GM10248 (cell line): ENCODE measurements at regions of chr1 and their contacts with region 1.

Region 1: DNA sequence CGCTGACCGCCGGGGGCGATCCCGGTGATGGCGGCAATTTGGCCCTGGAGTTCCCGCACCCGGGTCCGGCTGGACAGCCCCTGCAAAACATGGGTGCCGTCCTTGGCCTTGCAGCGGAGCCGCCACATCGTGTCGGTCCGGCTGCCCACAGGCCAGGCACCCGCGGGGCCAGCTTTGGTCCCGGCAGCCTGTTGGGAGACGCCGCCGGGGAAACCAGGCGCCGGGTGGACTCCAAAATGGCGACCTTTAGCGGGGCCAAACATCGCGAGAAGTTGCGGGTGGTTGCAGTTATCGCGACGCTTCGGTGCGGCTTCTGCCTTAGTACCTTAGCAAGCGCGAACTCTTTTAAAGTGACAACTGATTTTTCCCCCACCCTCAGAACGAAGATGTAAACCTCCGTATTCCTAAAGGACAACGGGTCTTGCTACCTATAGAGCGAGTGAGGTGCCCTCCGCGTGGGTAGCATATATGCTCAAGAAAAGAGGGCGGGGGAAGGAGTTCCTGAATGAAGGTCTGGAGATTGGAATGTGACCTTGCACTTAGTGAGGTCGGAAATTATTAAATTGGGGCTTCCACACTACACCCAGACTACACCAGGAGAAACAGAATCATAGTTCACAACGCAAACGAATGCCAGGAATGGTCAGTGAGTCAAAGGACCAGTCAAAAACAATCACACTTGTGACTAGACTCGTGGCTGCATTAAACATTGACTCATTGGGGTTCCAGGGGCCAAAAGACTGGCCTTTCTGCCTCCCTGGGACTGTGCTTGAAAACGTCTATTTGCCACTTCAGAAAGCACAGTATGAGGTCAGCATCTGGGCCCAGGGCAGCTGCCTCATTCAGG is at the start of gene YOD1:
- DNase-seq: peak; percentile 90
- CTCF ChIP-seq: no peak

Region 2: GRCh38 chr1:207015791-207016190 is 35.2 kb before region 1 on chr1:
- CTCF ChIA-PET with region 1: interaction called, 22 read pairs
- POLR2A ChIA-PET with region 1: no interaction called
- DNase-seq: no peak
- CTCF ChIP-seq: no peak

Region 3: GRCh38 chr1:207025144-207025880 is 25.7 kb before region 1 on chr1:
- CTCF ChIA-PET with region 1: interaction called, 12 read pairs
- POLR2A ChIA-PET with region 1: no interaction called
- DNase-seq: no peak
- CTCF ChIP-seq: no peak

Region 4: GRCh38 chr1:207032528-207033017 is 18.4 kb before region 1 on chr1 and contains the start of gene C1orf116:
- CTCF ChIA-PET with region 1: interaction called, 12 read pairs
- POLR2A ChIA-PET with region 1: no interaction called
- DNase-seq: no peak
- CTCF ChIP-seq: no peak

Region 5: GRCh38 chr1:207040181-207040533 is 10.8 kb before region 1 on chr1:
- CTCF ChIA-PET with region 1: interaction called, 12 read pairs
- POLR2A ChIA-PET with region 1: no interaction called
- DNase-seq: no peak
- CTCF ChIP-seq: no peak

Region 6: DNA sequence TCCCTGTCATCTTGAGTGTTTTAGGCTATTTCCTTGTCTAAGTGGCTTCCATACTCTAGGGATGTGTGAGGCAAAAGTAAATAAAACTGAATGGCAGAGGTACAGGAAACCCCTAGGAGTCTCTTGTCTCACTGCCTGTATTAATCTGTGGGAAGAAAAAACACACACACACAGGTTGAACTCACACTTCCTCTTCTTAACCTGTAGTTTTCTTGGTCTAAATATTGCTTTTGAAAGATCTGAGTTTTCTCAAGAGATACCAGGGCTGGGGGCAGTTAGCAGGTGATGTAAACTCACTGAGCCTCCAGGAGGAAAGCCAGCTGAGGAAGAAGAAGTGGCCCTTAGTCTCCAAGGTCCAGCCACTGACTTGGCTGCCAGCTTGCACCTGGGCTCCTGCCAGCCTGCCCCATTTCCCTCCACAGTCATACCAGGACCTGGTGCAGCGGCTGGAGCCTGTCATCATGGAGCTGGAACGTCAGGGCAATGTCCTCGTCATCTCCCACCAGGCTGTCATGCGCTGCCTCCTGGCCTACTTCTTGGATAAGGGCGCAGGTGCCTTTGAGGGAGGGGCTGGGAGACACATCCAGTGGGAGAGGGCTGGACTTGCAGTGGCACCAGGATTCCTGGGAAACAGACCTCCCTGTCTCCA is 19.0 kb after region 1 on chr1:
- CTCF ChIA-PET with region 1: interaction called, 16 read pairs
- POLR2A ChIA-PET with region 1: no interaction called
- DNase-seq: peak; percentile 35
- CTCF ChIP-seq: no peak

Region 7: GRCh38 chr1:207077470-207078377 is 26.7 kb after region 1 on chr1:
- CTCF ChIA-PET with region 1: interaction called, 13 read pairs
- POLR2A ChIA-PET with region 1: no interaction called
- DNase-seq: peak; percentile 66
- CTCF ChIP-seq: peak; percentile 86

Region 8: GRCh38 chr1:207194197-207194596 is 143.2 kb after region 1 on chr1:
- CTCF ChIA-PET with region 1: no interaction called
- POLR2A ChIA-PET with region 1: no interaction called
- DNase-seq: no peak
- CTCF ChIP-seq: no peak

Region 9: DNA sequence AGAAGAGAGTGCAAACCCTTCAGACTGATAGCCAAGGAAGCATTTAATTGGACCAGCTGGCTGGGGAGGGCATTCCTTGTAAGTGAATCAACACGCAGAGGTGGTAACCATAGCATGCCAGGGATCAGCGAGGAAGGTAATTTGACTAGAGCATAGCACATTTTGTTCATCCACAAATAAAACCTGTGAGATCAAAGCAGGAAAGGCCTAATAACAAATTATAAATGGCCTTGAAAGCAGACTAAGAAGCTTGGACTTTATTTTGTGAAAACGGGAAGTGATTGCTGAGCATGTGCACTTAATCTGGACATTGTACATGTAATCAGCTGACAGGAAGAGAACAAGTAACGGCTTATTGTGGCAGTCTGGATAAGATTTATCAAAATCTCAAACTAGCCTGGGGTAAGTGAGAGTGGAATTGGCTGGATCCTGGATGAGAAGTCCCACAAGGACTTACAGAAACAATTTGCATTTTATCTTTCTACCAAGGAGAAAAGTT is 258.8 kb after region 1 on chr1:
- CTCF ChIA-PET with region 1: no interaction called
- POLR2A ChIA-PET with region 1: no interaction called
- DNase-seq: peak; percentile 21
- CTCF ChIP-seq: no peak